PC-3 (cell line): ENCODE measurements at regions of chr5 and their contacts with region 1.

Region 1: DNA sequence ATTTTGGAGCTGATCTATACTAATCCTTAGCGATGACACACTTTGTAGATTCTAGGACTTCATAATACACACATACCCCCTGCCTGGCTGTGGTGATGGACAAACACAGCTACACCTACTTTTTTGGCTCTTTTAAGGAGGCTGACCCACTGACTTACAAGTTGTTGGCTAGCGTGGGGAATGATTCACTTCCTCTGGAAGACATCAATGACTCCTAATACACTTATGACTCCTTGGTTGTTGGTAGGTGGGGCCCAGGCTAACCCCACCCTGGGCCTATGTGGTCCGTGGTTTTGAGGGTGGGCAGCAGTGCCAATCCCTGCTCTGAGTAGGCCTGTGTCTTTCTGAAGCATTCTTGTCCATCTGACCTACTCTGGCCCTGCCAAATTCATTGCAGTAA is 144.4 kb downstream of the SLC12A2 start:
- DNase-seq: peak; percentile 97
- ATAC-seq: peak; percentile 95
- H3K4me3 ChIP-seq: peak overlapping the region; percentile 5; the same call in 1 of the 2 replicates
- H3K27ac ChIP-seq: peak overlapping the region; percentile 89
- H3K4me1 ChIP-seq: peaks cover 22% of the 10 kb centered on the region
- H3K27me3 ChIP-seq: no peaks in the 10 kb centered on the region
- CTCF ChIP-seq: no peak

Region 2: DNA sequence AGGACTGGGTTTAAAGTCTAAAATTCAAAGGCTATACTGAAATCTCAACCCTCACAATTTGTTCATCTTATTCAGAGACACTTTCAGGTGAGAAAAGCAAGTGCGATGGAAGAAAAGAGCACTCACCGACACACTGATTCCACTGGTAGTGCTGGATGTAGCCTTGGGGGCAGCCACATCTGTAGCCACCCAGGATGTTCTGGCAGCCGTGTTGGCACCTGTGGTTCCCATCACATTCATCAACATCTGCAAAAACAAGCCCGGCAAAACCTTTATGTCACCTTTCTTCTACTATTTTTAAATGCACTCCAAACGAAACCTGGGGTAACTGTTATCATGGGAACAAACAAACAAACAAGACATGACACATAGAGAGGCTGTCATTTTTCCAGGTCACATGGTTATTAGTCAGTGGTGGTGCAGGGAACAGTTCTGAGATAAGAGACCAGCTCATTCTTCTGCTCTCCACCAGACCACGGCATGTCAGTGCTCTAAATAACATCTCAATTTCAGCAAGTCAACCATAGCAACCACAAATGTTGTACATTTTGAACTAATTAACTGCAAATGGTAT is 44.0 kb after region 1 on chr5:
- CTCF ChIA-PET with region 1: no interaction called
- POLR2A ChIA-PET with region 1: no interaction called
- intact Hi-C with region 1: loop called (anchors 5 kb)
- DNase-seq: peak; percentile 72
- ATAC-seq: peak; percentile 67
- H3K4me3 ChIP-seq: no peak overlapping the region
- H3K27ac ChIP-seq: 0 out of 2 replicates have a peak overlapping the region, but pooled peaks have one; percentile 26
- H3K4me1 ChIP-seq: peaks cover 3% of the 10 kb centered on the region; the same call in 1 of the 2 replicates
- H3K27me3 ChIP-seq: no peaks in the 10 kb centered on the region
- CTCF ChIP-seq: no peak

Region 3: GRCh38 chr5:128349044-128349858 is 121.2 kb after region 1 on chr5:
- CTCF ChIA-PET with region 1: no interaction called
- POLR2A ChIA-PET with region 1: interaction called, 3 read pairs
- intact Hi-C with region 1: loop called (anchors 1 kb)
- DNase-seq: peak; percentile 91
- ATAC-seq: peak; percentile 95
- H3K4me3 ChIP-seq: no peak overlapping the region
- H3K27ac ChIP-seq: peak overlapping the region; percentile 51
- H3K4me1 ChIP-seq: peaks cover 14% of the 10 kb centered on the region
- H3K27me3 ChIP-seq: no peaks in the 10 kb centered on the region
- CTCF ChIP-seq: no peak

Region 4: GRCh38 chr5:128579088-128579487 is 351.1 kb after region 1 on chr5:
- CTCF ChIA-PET with region 1: no interaction called
- POLR2A ChIA-PET with region 1: no interaction called
- intact Hi-C with region 1: loop called (anchors 1 kb)
- DNase-seq: peak; percentile 92
- ATAC-seq: peak; percentile 90
- H3K4me3 ChIP-seq: peak overlapping the region; percentile 43; the same call in 1 of the 2 replicates
- H3K27ac ChIP-seq: peak overlapping the region; percentile 97
- H3K4me1 ChIP-seq: peaks cover 38% of the 10 kb centered on the region
- H3K27me3 ChIP-seq: no peaks in the 10 kb centered on the region
- CTCF ChIP-seq: no peak